Dorsolateral prefrontal cortex (tissue), 120 donors: ENCODE measurements at regions of chr18 and their contacts with region 1.

Region 1: DNA sequence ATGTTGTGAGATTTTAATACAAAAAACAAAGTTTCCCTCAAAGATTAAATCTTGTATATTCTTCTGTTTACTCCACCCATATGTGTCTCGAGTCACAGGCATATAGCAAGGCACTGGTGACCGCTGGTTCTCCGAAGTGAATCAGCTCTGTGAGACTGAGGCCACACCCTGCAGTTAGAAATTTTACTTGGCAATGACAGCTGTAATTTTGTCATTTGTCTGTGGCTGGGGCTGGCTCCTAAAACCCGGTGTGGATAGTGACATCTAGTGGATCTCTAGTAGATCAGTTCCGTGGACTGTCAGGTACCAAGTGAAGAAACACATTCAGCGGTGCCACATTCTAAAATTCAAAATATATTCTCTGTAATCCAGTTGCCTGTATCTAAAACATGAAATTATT is 278.0 kb downstream of the NEDD4L start:
- DNase-seq: peak in 6 of 10 donors; percentile 40 to 68 (median 56)
- H3K4me3 ChIP-seq: peak overlapping the region in 7 of 59 donors; percentile 1 to 28 (median 14)
- H3K27ac ChIP-seq: peak overlapping the region in 4 of 59 donors; percentile 1 to 42 (median 25)
- H3K27me3 ChIP-seq: no peaks in the 10 kb centered on the region
- CTCF ChIP-seq: peak in 55 of 56 donors; percentile 23 to 75 (median 63)

Region 2: GRCh38 chr18:58195278-58195765 is 126.7 kb before region 1 on chr18:
- intact Hi-C with region 1: loop called (anchors 5 kb)
- DNase-seq: peak in 8 of 10 donors; percentile 59 to 85 (median 74)
- H3K4me3 ChIP-seq: peak overlapping the region in 58 of 59 donors; percentile 5 to 69 (median 52)
- H3K27ac ChIP-seq: peak overlapping the region in 36 of 59 donors; percentile 6 to 82 (median 54)
- H3K27me3 ChIP-seq: peaks cover 0 to 2% (median 0%) of the 10 kb centered on the region in 45 donors
- CTCF ChIP-seq: no peak

Region 3: DNA sequence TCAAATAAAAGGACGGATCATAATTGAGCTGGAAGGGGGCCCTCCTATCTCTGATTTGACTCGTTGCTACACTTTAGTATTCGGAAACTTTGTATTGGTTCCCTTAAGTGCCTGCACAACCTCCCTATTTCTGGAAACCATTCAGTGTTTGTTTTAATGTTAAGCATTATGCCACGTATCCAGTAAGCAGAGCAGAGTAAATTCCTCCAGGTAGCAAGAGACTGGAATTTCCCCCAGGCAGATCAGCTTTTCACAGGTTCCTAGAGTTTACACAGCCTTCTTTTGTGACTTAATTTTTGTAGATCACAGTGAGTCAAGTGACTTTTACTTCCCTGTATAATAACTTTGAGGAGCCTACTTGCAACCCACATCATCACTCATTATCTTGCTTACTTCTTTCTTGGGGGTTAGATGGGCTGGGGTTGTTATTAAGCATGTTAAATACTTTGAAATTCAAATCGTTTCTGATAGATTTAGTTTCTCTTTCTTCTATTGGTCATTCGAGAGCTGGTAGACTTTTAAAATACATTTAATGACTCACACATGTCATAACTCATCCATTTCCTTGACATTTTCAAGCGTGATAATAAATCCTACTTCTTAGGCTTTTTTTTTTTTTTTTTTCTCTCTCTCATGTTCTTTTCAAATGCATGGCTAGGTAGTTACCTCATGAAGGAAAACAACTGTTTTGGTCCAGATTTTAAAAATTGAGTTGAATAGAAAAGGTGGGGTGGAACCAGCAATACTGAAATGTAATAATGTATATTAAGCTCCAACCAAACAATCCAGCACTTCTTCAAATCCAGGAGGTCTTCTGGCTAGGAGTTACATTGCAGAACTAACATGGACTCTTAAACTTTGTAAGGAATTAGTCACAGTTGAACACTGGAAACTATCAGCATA is 58.7 kb before region 1 on chr18:
- intact Hi-C with region 1: no loop called
- DNase-seq: no peak
- H3K4me3 ChIP-seq: no peak overlapping the region
- H3K27ac ChIP-seq: peak overlapping the region in 3 of 59 donors; percentile 3 to 49 (median 4)
- H3K27me3 ChIP-seq: no peaks in the 10 kb centered on the region
- CTCF ChIP-seq: no peak

Region 4: GRCh38 chr18:58493516-58494253 is 171.7 kb after region 1 on chr18:
- intact Hi-C with region 1: loop called in 1 of 2 experiments (anchors 10 kb)
- DNase-seq: peak; percentile 43 to 85 (median 76)
- H3K4me3 ChIP-seq: peak overlapping the region in 46 of 59 donors; percentile 5 to 61 (median 32)
- H3K27ac ChIP-seq: peak overlapping the region in 39 of 59 donors; percentile 6 to 79 (median 55)
- H3K27me3 ChIP-seq: peaks cover 0 to 4% (median 0%) of the 10 kb centered on the region in 45 donors
- CTCF ChIP-seq: peak; percentile 71 to 96 (median 87)

Region 5: DNA sequence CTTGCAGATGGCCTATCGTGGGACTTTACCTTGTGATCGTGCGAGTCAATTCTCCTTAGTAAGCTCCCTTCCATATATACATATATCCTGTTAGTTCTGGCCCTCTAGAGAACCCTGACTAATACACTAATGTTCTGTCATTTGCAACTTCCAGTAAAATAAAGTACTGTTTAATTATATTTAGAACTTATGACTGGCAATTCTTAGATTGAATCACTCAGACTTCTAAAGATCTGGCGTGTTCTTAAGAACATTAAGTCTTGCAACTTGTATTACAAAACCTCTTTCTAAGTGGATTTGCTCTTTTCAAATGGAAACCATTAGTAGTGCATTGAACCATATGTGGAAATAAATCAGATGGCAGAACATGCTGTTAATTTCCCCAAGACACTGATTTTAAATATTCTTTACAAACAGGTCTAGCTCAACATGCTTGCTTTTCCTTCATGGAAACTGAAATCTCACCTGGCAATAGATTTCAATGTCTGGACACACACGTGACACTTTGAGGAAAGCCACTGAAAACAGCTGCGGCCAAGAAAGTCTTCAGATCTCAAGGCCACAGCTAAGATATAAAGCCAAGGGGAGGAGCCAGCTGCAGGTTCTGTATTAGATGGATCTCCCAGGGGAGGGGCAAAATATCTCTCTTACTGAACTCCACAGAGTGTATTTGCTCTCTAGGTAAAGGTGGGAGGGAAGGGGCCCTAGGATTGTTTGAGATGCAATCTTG is 1628.4 kb after region 1 on chr18:
- intact Hi-C with region 1: loop called in 1 of 2 experiments (anchors 5 kb)
- DNase-seq: no peak
- H3K4me3 ChIP-seq: no peak overlapping the region
- H3K27ac ChIP-seq: no peak overlapping the region
- H3K27me3 ChIP-seq: peaks cover 0 to 6% (median 0%) of the 10 kb centered on the region in 45 donors
- CTCF ChIP-seq: no peak